ENCODE measurements at regions of chr1 and their contacts with region 1.

Region 1: DNA sequence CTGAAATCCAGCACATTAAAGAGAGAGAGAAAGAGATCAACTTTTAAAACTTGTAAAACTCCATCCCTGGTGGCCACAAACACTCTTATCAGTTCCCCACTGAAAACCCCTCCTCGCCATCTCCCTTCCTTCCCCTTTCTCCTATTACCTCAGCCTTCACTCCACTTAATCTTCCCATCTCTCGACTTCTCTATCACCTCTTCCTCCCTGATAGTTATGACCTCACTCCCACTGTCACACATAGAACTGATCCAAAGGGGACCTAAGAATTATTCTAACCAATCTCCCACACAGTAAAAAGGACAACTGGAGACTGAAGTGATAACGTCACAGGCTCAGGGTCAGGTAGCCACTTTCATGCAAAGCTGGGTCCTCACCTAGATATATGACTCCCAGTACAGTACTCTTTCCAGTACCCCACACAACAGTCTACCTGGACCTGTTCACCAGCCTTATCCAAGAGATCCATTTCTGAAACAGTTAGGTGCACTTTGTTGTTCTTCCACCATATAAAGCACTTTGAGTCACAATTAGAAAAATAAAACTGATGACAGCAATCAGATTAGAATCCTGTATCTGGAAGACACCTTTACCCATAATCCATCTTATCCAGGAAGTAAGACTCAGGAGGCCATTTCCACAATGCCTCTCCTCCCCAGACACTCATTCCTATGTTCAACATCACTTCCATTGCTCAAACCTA is 324.8 kb downstream of the SMYD3 start:
- DNase-seq: peak; percentile 43 to 81 (median 57)
- ATAC-seq: peak; percentile 32
- H3K4me3 ChIP-seq: no peak overlapping the region
- H3K27ac ChIP-seq: peak overlapping the region; percentile 67
- H3K4me1 ChIP-seq: peaks cover 0 to 52% of the 10 kb centered on the region in 2 experiments; a peak in 4 of 5 replicates
- H3K27me3 ChIP-seq: no peaks in the 10 kb centered on the region
- CTCF ChIP-seq: no peak
- EP300 ChIP-seq: peak; percentile 83
- POLR2A ChIP-seq: no peak
- RAD21 ChIP-seq: 0 out of 4 replicates have a peak, but pooled peaks have one; percentile 1 to 22

Region 2: DNA sequence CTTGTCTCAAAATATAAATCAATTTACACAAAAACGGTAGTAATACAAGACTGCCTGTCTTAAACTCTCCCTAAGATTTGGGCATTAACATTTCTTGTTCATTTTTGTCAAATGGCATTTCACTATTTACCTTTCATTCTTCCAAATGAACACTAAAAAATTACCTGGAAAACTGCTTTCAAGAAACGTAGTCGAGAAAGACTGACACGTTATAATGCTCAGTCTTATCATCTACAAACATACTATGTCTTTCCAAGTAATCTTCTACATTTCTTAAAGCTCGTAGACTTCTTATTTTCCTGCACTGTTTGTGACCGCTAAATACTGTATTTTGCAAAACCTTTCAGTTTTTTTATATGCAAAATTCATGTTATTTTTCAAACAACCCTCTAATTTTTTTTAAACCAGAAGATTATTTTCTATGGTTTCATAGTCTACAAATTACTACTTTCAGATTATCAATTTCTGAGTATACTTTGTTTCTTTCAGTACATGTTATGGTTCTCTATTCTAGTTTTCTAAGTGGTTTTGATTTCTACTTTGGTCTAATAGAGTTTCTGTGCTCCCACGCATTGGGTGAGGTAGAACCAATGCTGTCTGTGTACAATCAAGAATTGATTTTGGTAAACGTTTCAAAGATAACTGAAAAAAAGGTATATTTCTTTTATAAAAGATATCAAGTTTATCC is 11.6 kb before region 1 on chr1:
- CTCF ChIA-PET with region 1: no interaction called
- POLR2A ChIA-PET with region 1: interaction called, 4 read pairs
- in situ Hi-C with region 1: no loop called
- intact Hi-C with region 1: loop called (anchors 1 kb)
- DNase-seq: peak; percentile 45 to 78 (median 58)
- ATAC-seq: peak; percentile 72
- H3K4me3 ChIP-seq: peak overlapping the region; percentile 3; the same call in 1 of the 2 replicates
- H3K27ac ChIP-seq: peak overlapping the region; percentile 78; the same call in 2 of the 3 replicates
- H3K4me1 ChIP-seq: peaks cover 21 to 53% of the 10 kb centered on the region in 2 experiments
- H3K27me3 ChIP-seq: no peaks in the 10 kb centered on the region
- CTCF ChIP-seq: no peak
- EP300 ChIP-seq: peak; percentile 94
- POLR2A ChIP-seq: no peak
- RAD21 ChIP-seq: 0 out of 4 replicates have a peak, but pooled peaks of 1 of the 2 experiments have one; percentile 7

Measured in K562 (cell line).